Cardiac septum (tissue), 1 donor: ENCODE measurements at regions of chr16 and their contacts with region 1.

Region 1: GRCh38 chr16:80540516-80541272 is at the start of gene DYNLRB2:
- DNase-seq: peak; percentile 95
- total RNA-seq, gene DYNLRB2: not detected

Region 2: GRCh38 chr16:80583466-80583865 is 42.8 kb after region 1 on chr16:
- intact Hi-C with region 1: no loop called
- DNase-seq: no peak

Region 3: GRCh38 chr16:80824718-80825364 is 284.1 kb after region 1 on chr16:
- intact Hi-C with region 1: loop called (anchors 10 kb)
- DNase-seq: no peak

Region 4: GRCh38 chr16:81261049-81261648 is 720.5 kb after region 1 on chr16:
- intact Hi-C with region 1: no loop called
- DNase-seq: no peak